HepG2 (cell line): ENCODE measurements at regions of chr19 and their contacts with region 1.

Region 1: DNA sequence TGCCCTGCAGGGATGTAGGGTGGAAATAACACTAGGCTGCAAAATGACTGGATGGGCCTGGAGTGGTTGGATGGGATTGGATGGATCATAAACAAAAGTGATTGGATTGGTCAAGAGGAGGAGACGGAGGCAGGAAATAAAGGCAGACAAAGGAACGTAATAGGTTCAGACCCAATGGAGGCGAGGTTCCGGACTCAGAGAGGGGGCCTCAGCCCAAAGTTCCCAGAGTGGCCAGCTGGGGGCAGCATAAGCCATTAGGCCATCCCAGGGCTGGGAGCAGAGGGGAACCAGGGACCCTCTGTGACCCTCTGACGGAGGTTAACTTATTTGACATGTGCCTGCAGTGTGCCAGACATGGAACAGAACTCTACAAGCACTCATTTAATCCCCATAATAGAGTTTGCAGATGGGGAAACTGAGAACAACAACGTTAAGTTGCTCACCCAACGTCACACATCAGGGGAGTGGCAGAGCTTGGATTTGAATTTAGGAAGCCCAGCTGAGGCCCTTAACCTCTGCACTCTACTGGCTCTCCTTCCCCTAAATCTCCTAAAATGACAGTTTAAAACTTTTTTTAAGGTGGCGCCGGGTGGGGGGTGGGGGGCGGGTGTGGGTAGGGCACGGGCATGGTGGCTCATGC is 15.3 kb upstream of the MAP1S start:
- DNase-seq: peak; percentile 33
- ATAC-seq: peak; percentile 67
- H3K4me3 ChIP-seq: no peak overlapping the region
- H3K27ac ChIP-seq: no peak overlapping the region
- H3K4me1 ChIP-seq: no peaks in the 10 kb centered on the region
- H3K27me3 ChIP-seq: peaks cover 2 to 8% of the 10 kb centered on the region in 2 experiments; a peak in 3 of 5 replicates
- CTCF ChIP-seq: peak; percentile 82
- EP300 ChIP-seq: no peak
- POLR2A ChIP-seq: no peak
- RAD21 ChIP-seq: peak; percentile 48; the same call in 1 of the 2 replicates

Region 2: DNA sequence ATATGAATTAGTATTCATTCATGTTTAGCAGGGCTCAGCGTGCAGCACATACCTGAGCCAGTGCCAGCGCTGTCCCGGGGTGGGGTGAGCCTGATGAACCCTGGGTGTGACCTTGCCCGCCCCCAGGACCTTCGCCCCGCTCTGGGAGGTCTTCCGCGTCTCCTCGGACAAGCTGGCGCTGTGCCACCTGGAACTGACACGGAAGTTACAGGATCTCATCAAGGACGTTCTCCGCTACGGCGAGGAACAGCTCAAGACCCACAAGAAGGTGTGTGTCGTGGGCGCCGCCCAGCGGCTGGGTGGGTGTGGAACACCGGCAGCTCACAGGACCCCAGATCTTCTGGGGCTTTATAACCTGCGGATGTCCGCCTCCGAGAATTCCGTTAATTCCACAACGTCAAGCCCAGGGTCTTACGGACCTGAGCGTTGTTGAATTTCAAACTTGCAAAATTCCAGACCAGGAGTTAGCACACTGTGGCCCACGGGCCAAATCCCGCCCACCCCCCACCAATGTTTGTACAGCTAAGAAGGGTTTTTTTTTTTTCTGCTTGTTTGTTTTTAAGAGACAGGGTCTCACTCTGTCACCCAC is 62.7 kb after region 1 on chr19:
- CTCF ChIA-PET with region 1: interaction called, 9 read pairs
- POLR2A ChIA-PET with region 1: no interaction called
- in situ Hi-C with region 1: loop called (anchors 5 kb)
- intact Hi-C with region 1: loop called (anchors 2 kb)
- DNase-seq: peak; percentile 89
- ATAC-seq: peak; percentile 83
- H3K4me3 ChIP-seq: peak overlapping the region; percentile 8 to 63 (median 13); a peak in 3 of 6 replicates
- H3K27ac ChIP-seq: peak overlapping the region; percentile 58
- H3K4me1 ChIP-seq: peaks cover 28% of the 10 kb centered on the region
- H3K27me3 ChIP-seq: no peaks in the 10 kb centered on the region
- CTCF ChIP-seq: peak; percentile 98
- EP300 ChIP-seq: peak in 1 of 2 experiments; percentile 22; a peak in 1 of 4 replicates
- POLR2A ChIP-seq: no peak
- RAD21 ChIP-seq: peak; percentile 87

Region 3: DNA sequence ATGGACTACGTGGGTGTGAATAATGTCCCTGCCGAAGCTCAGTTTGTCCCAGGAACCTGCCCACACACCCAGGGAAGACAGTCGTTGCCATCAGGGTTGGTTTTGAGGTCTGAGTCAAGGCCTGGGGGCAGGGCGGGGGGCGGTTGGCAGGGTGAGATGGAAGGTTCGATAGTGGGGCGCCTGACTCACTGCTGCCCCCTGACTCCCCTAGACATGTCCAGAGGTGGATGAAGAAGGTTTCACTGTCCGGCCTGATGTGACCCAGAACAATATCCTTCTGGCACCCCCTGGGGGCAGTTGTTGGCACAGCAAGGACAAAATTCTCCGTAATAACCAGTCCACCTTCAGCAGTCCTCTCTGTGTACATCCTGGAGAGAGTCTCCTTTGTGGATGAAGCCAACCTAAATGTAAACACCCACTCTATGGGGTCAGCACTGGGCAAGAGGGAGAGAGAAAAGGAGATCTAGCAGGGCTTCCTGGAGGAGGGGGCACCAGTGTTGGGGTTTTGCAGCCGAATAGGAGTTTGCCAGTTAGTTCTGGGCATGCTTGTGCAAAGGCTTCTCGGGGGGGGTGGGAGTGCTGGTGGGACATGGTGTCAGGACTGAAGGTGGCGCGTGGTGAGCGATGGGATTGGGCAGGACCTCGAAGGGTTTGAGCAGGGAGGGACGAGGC is 71.4 kb after region 1 on chr19:
- CTCF ChIA-PET with region 1: interaction called, 13 read pairs
- POLR2A ChIA-PET with region 1: no interaction called
- in situ Hi-C with region 1: loop called (anchors 5 kb)
- intact Hi-C with region 1: no loop called
- DNase-seq: peak; percentile 64
- ATAC-seq: peak; percentile 79
- H3K4me3 ChIP-seq: no peak overlapping the region
- H3K27ac ChIP-seq: no peak overlapping the region
- H3K4me1 ChIP-seq: peaks cover 8% of the 10 kb centered on the region; the same call in 1 of the 2 replicates
- H3K27me3 ChIP-seq: no peaks in the 10 kb centered on the region
- CTCF ChIP-seq: peak; percentile 87
- EP300 ChIP-seq: no peak
- POLR2A ChIP-seq: no peak
- RAD21 ChIP-seq: peak; percentile 72